Activated CD4-positive, alpha-beta memory T cell treated with anti-CD3 and anti-CD28 coated beads for 36 hours (primary cell): ENCODE measurements at regions of chr5 and their contacts with region 1.

Region 1: GRCh38 chr5:151252762-151253604 is at the start of gene GM2A:
- DNase-seq: peak; percentile 99
- H3K4me3 Mint-ChIP-seq: peak within 1 kb of the TSS; percentile 84
- H3K27ac Mint-ChIP-seq: peak within 1 kb of the TSS; percentile 94
- H3K4me1 Mint-ChIP-seq: peaks cover 45% of the 10 kb centered on the region
- H3K27me3 Mint-ChIP-seq: no peaks in the 10 kb centered on the region
- total RNA-seq, gene GM2A: 28.7 to 29.1 TPM

Region 2: DNA sequence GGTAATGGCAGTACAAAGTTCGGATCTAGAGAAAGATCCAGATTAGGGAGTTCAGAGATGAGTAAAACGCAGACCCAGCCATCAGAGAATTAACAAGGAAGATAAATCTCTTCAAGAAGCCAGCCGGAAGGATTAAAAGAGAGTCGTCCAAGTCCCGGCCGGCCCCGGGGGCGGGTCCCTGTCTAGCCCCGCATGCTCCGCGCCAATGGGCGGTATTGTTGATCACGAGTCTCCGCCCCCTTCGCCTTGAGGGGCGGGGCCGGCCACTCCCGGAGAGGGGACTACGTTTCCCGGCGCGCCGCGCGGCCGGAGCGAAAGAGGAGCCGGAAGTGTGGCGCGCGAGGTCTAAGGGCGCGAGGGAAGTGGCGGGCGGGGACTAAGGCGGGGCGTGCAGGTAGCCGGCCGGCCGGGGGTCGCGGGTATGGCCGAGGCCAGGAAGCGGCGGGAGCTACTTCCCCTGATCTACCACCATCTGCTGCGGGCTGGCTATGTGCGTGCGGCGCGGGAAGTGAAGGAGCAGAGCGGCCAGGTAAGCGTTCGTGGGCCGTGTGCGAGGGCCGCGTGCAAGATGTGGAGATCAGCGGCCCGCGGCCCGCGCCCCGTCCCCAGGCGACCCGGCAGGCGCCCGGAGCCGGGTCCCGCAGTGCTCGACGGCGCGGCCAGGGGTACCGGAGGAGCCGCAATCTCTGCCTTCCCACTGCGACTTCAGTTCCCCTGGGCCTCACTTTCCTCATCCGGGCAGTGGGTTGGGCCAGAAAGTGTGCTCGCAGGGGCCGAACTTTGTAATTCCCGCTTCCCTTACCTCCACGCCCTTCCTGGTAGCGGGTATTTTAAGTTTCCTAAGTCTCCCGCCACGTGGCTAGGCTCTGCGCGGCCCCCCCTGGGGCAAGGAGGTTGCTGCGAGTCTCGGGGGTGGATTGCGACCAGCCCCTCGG is 895.4 kb before region 1 on chr5 and contains the start of gene TCOF1:
- CTCF ChIA-PET with region 1: no interaction called
- POLR2A ChIA-PET with region 1: no interaction called
- intact Hi-C with region 1: loop called (anchors 5 kb)
- DNase-seq: peak; percentile 98
- H3K4me3 Mint-ChIP-seq: peak within 1 kb of the TSS; percentile 89
- H3K27ac Mint-ChIP-seq: peak within 1 kb of the TSS; percentile 81
- H3K4me1 Mint-ChIP-seq: peaks cover 35% of the 10 kb centered on the region
- H3K27me3 Mint-ChIP-seq: no peaks in the 10 kb centered on the region
- total RNA-seq, gene TCOF1: 91.3 to 95.0 TPM

Region 3: DNA sequence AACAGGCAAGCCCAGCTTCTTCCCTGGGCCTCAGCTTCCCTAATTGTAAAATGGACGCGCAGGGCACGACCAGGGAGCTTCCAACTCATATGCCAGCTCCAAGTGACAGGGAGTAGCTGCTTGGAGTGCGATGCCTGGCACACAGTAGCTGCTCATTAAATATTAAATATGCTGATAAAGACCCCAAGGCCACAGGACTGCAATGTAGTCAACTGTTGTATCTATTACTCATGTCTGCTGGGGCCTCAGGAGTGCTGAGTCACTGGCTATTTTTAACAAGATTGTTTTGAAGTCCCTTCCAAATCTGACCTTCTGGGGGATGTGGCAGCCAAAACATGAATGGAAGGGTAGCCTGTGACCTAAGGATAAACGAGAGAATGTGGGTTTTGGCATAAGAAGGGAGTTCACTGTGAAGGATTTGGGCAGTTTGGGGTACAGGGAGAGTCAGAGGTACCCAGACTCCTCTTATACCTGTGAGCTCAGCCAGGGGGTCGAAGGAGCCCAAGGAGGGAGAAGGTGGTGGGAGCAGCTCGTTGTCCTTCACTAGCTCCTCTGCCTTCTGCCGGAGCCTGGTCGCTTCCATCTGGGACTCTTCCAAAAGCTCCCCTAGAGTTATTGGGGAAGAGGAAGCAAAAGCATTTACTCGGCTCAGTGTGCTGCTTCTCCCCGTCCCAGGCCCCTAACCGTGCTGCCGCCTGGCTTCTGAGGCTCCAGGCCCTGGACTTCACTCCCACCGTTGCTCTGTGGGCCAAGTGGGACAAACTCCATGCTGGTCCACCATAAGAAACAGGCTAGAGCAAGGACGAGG is 189.6 kb before region 1 on chr5:
- CTCF ChIA-PET with region 1: no interaction called
- POLR2A ChIA-PET with region 1: no interaction called
- intact Hi-C with region 1: no loop called
- DNase-seq: no peak
- H3K4me3 Mint-ChIP-seq: no peak overlapping the region
- H3K27ac Mint-ChIP-seq: peak overlapping the region; percentile 94
- H3K4me1 Mint-ChIP-seq: peaks cover 97% of the 10 kb centered on the region
- H3K27me3 Mint-ChIP-seq: no peaks in the 10 kb centered on the region

Region 4: DNA sequence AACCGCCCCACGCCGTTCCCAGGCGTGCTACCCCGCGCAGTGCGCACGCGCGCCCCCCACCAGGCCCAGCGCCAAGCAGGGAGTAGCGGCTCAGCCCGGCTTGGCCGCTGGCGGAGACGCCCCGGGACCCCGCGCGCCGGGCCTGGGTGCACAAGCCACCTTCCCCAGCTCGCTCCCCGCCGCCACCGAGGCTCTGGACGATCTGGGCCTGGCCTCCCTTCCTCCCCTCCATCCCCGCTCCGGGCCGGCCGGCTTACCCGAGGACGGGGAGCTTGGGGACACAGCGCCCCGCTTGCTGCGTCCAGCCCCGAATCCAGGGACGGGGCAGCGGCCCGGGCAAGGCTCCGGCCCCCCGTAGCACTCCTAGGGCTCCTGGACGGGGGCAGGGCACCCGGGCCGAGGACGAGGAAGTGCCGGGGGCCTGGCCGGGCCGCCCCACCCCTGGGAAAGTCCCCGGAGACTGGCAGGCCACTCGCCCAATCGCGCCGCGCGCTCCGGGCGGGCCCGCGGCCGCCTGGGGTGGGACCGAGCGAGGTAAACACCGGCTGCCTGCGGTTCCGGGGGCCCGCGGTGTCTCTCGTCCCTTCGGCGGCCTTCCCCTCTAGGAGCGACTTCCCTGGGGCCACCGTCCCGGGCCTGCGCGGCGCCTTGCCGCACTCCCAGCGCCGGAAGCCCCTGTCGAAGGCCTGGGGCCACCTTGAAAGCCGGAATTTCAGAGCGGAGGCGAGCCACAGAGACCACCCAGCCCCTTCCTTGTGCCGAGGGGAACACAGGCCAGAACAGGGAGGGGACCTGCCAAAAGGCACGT is 172.2 kb before region 1 on chr5 and contains the start of gene TNIP1:
- CTCF ChIA-PET with region 1: no interaction called
- POLR2A ChIA-PET with region 1: interaction called, 3 read pairs
- intact Hi-C with region 1: loop called (anchors 2 kb)
- DNase-seq: peak; percentile 96
- H3K4me3 Mint-ChIP-seq: peak within 1 kb of the TSS; percentile 89
- H3K27ac Mint-ChIP-seq: peak within 1 kb of the TSS; percentile 94
- H3K4me1 Mint-ChIP-seq: peaks cover 69% of the 10 kb centered on the region
- H3K27me3 Mint-ChIP-seq: no peaks in the 10 kb centered on the region
- total RNA-seq, gene TNIP1: 388 to 401 TPM

Region 5: GRCh38 chr5:151157426-151158286 is 95.3 kb before region 1 on chr5 and contains the start of gene ANXA6:
- CTCF ChIA-PET with region 1: no interaction called
- POLR2A ChIA-PET with region 1: no interaction called
- intact Hi-C with region 1: loop called (anchors 1 kb)
- DNase-seq: peak; percentile 80
- H3K4me3 Mint-ChIP-seq: peak within 1 kb of the TSS; percentile 97
- H3K27ac Mint-ChIP-seq: peak within 1 kb of the TSS; percentile 90
- H3K4me1 Mint-ChIP-seq: peaks cover 52% of the 10 kb centered on the region
- H3K27me3 Mint-ChIP-seq: no peaks in the 10 kb centered on the region
- total RNA-seq, gene ANXA6: 430 to 443 TPM

Region 6: DNA sequence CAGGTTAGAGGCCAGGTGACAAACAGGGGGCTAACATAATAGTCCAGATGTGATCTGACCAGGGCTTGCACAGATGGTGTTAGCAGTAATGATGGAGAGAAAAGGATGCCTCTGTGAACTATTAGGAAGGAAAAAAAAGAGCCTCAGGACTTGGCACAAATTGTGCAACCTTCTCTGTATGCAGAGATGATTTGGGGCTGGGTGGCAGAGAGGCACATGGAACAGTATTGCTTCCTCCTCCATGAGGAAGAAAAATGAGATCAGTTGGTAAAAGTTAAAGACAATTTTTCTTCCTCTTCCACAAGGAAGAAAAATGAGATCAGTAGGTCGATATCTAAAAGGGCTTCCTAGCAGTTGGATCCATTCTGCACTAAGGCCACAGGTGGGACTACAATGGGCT is 81.5 kb before region 1 on chr5:
- CTCF ChIA-PET with region 1: no interaction called
- POLR2A ChIA-PET with region 1: no interaction called
- intact Hi-C with region 1: no loop called
- DNase-seq: no peak
- H3K4me3 Mint-ChIP-seq: no peak overlapping the region
- H3K27ac Mint-ChIP-seq: no peak overlapping the region
- H3K4me1 Mint-ChIP-seq: peaks cover 10% of the 10 kb centered on the region
- H3K27me3 Mint-ChIP-seq: no peaks in the 10 kb centered on the region

Region 7: GRCh38 chr5:151223469-151224264 is 29.3 kb before region 1 on chr5 and contains the start of gene CCDC69:
- CTCF ChIA-PET with region 1: interaction called, 9 read pairs
- POLR2A ChIA-PET with region 1: interaction called, 17 read pairs
- intact Hi-C with region 1: loop called (anchors 1 kb)
- DNase-seq: peak; percentile 70
- H3K4me3 Mint-ChIP-seq: peak within 1 kb of the TSS; percentile 89
- H3K27ac Mint-ChIP-seq: peak within 1 kb of the TSS; percentile 86
- H3K4me1 Mint-ChIP-seq: peaks cover 51% of the 10 kb centered on the region
- H3K27me3 Mint-ChIP-seq: no peaks in the 10 kb centered on the region
- total RNA-seq, gene CCDC69: 24.6 to 27.6 TPM

Region 8: GRCh38 chr5:151264113-151264512 is 11.1 kb after region 1 on chr5:
- CTCF ChIA-PET with region 1: interaction called, 4 read pairs
- POLR2A ChIA-PET with region 1: interaction called, 3 read pairs
- intact Hi-C with region 1: loop called (anchors 1 kb)
- DNase-seq: peak; percentile 67
- H3K4me3 Mint-ChIP-seq: no peak overlapping the region
- H3K27ac Mint-ChIP-seq: peak overlapping the region; percentile 83
- H3K4me1 Mint-ChIP-seq: peaks cover 19% of the 10 kb centered on the region
- H3K27me3 Mint-ChIP-seq: no peaks in the 10 kb centered on the region

Region 9: GRCh38 chr5:151315998-151316597 is 63.1 kb after region 1 on chr5:
- CTCF ChIA-PET with region 1: interaction called, 10 read pairs
- POLR2A ChIA-PET with region 1: interaction called, 3 read pairs
- intact Hi-C with region 1: no loop called
- DNase-seq: peak; percentile 76
- H3K4me3 Mint-ChIP-seq: no peak overlapping the region
- H3K27ac Mint-ChIP-seq: no peak overlapping the region
- H3K4me1 Mint-ChIP-seq: no peaks in the 10 kb centered on the region
- H3K27me3 Mint-ChIP-seq: peaks cover 2% of the 10 kb centered on the region

Region 10: DNA sequence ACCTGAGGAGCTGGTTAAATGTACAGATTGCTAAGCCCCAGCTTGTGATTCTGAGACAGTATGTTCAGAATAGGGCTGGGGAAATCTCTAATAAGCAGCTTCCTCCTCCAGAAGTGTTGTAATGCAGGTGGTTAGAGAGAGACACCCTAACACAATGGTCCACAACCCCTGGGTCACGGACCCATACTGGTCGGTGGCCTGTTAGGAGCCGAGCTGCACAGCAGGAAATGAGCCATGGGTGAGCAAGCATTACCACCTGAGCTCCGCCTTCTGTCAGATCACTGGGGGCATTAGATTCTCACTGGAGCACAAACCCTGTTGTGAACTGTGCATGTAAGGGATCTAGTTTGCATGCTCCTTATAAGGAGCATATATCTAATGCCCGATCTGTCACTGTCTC is 256.2 kb after region 1 on chr5:
- CTCF ChIA-PET with region 1: no interaction called
- POLR2A ChIA-PET with region 1: no interaction called
- intact Hi-C with region 1: no loop called
- DNase-seq: no peak
- H3K4me3 Mint-ChIP-seq: no peak overlapping the region
- H3K27ac Mint-ChIP-seq: no peak overlapping the region
- H3K4me1 Mint-ChIP-seq: no peaks in the 10 kb centered on the region
- H3K27me3 Mint-ChIP-seq: no peaks in the 10 kb centered on the region